Caco-2 (cell line): ENCODE measurements at regions of chr12 and their contacts with region 1.

Region 1: DNA sequence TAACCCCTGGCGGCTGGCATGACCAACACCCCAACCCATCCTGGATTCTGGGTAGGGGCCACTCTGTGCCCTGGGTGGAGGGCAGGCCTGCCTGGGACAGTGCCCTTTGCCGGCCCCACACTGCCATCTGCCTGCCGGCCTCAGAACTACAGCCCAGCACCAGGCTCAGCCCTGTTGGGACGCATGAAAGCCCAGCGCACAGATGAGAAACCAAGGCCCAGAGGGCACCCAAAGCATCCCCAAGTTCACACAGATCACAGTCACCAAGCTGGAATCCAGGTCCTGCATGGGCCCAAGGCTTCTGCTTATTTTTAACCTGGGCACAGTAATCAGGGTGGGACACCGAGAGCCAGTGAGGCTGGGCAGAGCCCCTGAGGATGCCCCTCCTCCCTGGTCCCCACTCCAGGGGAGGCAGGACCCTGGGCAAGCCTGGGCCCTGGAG is 26.2 kb downstream of the RFLNA start:
- DNase-seq: peak; percentile 66 to 80
- H3K4me3 ChIP-seq: no peak overlapping the region
- H3K4me3 Mint-ChIP-seq: no peak overlapping the region
- H3K27ac Mint-ChIP-seq: no peak overlapping the region
- H3K4me1 ChIP-seq: peaks cover 5% of the 10 kb centered on the region; the same call in 1 of the 2 replicates
- H3K4me1 Mint-ChIP-seq: peaks cover 8% of the 10 kb centered on the region
- H3K27me3 ChIP-seq: no peaks in the 10 kb centered on the region
- H3K27me3 Mint-ChIP-seq: no peaks in the 10 kb centered on the region
- CTCF ChIP-seq: peak; percentile 79 to 84

Region 2: DNA sequence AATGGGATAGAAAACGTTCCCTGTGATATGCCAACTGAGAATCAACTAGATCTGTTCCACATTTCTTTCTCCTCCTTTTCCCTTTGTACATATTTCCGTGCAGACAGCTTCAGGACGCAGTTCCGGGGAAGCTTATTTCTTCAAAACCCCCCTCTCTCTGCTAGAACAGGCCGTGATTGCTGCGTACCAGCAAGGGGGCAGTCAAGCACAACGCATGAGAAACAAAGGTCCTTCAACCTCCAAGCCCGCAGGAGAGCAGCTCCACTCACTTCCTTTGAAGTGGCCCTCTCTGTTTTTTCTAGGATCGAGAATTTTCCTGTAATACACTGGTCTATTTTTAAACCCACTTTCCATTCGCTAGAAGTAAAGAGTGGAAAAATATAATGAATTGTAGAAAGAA is 267.2 kb before region 1 on chr12:
- CTCF ChIA-PET with region 1: interaction called, 7 read pairs
- POLR2A ChIA-PET with region 1: no interaction called
- intact Hi-C with region 1: loop called (anchors 1 kb)
- DNase-seq: peak; percentile 69 to 76
- H3K4me3 ChIP-seq: no peak overlapping the region
- H3K4me3 Mint-ChIP-seq: no peak overlapping the region
- H3K27ac Mint-ChIP-seq: peak overlapping the region; percentile 21
- H3K4me1 ChIP-seq: 0 out of 2 replicates have a peak, but pooled peaks cover 3% of the 10 kb centered on the region
- H3K4me1 Mint-ChIP-seq: peaks cover 6% of the 10 kb centered on the region
- H3K27me3 ChIP-seq: no peaks in the 10 kb centered on the region
- H3K27me3 Mint-ChIP-seq: no peaks in the 10 kb centered on the region
- CTCF ChIP-seq: peak; percentile 37 to 72

Region 3: DNA sequence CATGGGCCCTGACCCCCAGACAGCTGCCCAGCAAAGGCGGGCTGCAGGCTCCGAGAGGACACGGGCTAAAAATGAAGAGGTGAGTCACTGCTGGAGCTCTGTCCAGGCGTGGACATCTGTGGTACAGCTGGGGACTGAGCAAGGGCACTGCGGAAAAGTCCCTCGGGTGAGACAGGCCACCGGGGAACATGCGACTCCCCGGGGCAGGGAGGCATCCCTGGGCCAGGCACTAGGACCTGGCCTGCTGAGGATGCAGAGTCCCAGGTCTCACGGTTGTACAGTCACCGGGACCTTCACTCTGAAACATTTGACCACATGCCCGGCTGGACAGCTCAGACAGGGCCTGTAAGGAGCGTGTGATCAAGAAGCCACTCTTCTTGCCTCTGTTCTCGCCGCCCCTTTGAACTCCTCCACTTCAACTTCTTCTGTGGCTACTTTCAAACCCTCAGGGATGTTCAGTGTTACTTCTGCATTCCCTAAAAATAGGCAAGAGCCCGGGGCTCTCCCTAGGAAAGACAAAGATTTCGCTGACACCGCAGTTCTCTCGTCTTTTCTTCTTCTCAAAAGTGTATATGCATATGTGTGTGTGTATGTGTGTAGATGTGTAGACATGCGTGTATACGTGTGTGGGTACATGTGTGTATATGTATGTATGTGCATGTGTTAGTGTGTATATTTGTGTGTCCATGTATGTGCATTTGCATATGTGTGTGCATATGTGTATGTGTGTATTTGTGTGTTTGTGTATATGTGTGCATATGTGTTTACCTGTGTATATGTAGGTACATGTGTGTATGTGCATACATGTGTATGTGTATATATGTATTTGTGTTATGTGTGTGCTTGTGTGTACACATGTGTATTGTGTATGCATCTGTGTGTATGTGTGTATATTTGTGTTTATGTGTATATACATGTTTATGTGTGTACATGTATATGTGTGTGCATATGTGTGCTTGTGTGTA is 31.1 kb before region 1 on chr12:
- CTCF ChIA-PET with region 1: no interaction called
- POLR2A ChIA-PET with region 1: no interaction called
- intact Hi-C with region 1: no loop called
- DNase-seq: no peak
- H3K4me3 ChIP-seq: no peak overlapping the region
- H3K4me3 Mint-ChIP-seq: no peak overlapping the region
- H3K27ac Mint-ChIP-seq: no peak overlapping the region
- H3K4me1 ChIP-seq: peaks cover 21% of the 10 kb centered on the region
- H3K4me1 Mint-ChIP-seq: peaks cover 28% of the 10 kb centered on the region
- H3K27me3 ChIP-seq: no peaks in the 10 kb centered on the region
- H3K27me3 Mint-ChIP-seq: no peaks in the 10 kb centered on the region
- CTCF ChIP-seq: no peak

Region 4: DNA sequence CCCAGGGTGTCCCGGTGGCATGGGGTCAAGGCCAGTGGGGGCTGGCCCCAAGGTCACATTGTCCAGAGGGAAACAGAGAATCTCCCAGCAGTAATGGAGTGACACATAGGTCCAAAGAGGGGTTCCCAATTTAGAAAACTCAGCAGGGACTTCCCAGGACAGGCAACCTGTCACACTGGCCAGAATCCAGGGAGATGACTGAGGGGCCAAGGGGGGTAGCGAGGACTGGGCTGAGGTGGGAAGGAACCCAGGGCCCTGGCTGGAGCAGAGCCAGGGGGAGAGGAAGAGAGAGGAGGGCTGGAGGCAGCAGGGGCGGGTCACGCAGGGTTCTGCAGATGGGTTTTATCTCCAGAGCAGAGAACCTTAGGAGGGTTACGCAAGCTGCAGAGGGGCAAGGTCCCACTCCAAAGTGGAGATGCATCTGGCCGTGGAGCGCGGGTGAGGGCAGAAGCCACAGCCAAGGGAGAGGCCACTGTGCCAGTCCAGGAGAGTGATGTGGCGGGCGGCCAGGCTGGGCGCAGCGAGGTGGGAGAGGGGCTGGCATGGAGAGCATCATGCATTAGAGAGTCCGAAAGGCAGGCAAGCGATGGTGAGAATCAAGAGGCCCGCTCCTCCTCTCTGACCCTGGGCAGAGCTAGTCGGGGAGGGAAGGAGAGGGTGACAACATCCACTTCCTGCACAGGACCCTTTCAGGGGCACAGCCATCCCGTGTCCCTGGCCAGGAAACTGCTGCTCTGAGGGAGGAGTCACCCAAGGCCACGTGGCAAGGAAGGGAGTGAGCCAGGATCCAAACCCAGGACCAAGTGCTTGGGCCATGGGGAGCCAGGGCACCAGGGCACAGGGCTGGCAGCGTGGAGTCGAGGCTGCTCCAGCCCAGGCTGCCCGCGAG is 217.4 kb after region 1 on chr12:
- CTCF ChIA-PET with region 1: no interaction called
- POLR2A ChIA-PET with region 1: no interaction called
- intact Hi-C with region 1: no loop called
- DNase-seq: no peak
- H3K4me3 ChIP-seq: no peak overlapping the region
- H3K4me3 Mint-ChIP-seq: no peak overlapping the region
- H3K27ac Mint-ChIP-seq: peak overlapping the region; percentile 79
- H3K4me1 ChIP-seq: peaks cover 19% of the 10 kb centered on the region
- H3K4me1 Mint-ChIP-seq: peaks cover 20% of the 10 kb centered on the region
- H3K27me3 ChIP-seq: no peaks in the 10 kb centered on the region
- H3K27me3 Mint-ChIP-seq: no peaks in the 10 kb centered on the region
- CTCF ChIP-seq: no peak

Region 5: GRCh38 chr12:124767066-124767821 is 446.2 kb after region 1 on chr12:
- CTCF ChIA-PET with region 1: no interaction called
- POLR2A ChIA-PET with region 1: no interaction called
- intact Hi-C with region 1: loop called (anchors 10 kb)
- DNase-seq: peak; percentile 74 to 88
- H3K4me3 ChIP-seq: no peak overlapping the region
- H3K4me3 Mint-ChIP-seq: no peak overlapping the region
- H3K27ac Mint-ChIP-seq: no peak overlapping the region
- H3K4me1 ChIP-seq: peaks cover 19% of the 10 kb centered on the region; the same call in 1 of the 2 replicates
- H3K4me1 Mint-ChIP-seq: peaks cover 36% of the 10 kb centered on the region
- H3K27me3 ChIP-seq: no peaks in the 10 kb centered on the region
- H3K27me3 Mint-ChIP-seq: no peaks in the 10 kb centered on the region
- CTCF ChIP-seq: peak; percentile 93 to 99